Esophagus muscularis mucosa (tissue), 4 donors: ENCODE measurements at regions of chr6 and their contacts with region 1.

Region 1: DNA sequence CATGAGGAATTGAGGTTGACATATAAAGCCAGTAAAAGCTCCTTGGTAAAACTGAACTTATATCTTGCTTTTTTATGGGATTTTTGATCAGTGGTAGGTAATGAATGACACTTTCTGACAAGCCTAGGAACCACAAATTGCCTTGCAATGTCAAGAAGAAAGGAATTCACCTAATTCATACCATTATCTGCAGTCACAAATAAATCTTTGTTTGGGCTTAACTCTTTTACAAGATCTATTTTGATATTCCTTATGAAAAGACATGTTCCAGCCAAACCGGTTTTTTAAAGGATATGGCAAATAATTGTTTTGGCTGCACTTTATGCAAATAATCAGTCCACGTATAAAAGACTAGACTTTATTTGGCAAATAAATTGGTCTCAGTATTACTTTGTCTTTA is 771.8 kb upstream of the ADGRB3 start:
- DNase-seq: no peak
- H3K4me3 ChIP-seq: no peak overlapping the region
- H3K27ac ChIP-seq: no peak overlapping the region
- H3K4me1 ChIP-seq: no peaks in the 10 kb centered on the region
- H3K27me3 ChIP-seq: no peaks in the 10 kb centered on the region
- CTCF ChIP-seq: no peak
- EP300 ChIP-seq: no peak
- POLR2A ChIP-seq: no peak

Region 2: GRCh38 chr6:67839818-67840217 is 23.5 kb before region 1 on chr6:
- intact Hi-C with region 1: loop called (anchors 1 kb)
- DNase-seq: no peak
- H3K4me3 ChIP-seq: no peak overlapping the region
- H3K27ac ChIP-seq: no peak overlapping the region
- H3K4me1 ChIP-seq: no peaks in the 10 kb centered on the region
- H3K27me3 ChIP-seq: no peaks in the 10 kb centered on the region
- CTCF ChIP-seq: no peak
- EP300 ChIP-seq: no peak
- POLR2A ChIP-seq: no peak